ENCODE measurements at regions of chr2 and their contacts with region 1.

Region 1: DNA sequence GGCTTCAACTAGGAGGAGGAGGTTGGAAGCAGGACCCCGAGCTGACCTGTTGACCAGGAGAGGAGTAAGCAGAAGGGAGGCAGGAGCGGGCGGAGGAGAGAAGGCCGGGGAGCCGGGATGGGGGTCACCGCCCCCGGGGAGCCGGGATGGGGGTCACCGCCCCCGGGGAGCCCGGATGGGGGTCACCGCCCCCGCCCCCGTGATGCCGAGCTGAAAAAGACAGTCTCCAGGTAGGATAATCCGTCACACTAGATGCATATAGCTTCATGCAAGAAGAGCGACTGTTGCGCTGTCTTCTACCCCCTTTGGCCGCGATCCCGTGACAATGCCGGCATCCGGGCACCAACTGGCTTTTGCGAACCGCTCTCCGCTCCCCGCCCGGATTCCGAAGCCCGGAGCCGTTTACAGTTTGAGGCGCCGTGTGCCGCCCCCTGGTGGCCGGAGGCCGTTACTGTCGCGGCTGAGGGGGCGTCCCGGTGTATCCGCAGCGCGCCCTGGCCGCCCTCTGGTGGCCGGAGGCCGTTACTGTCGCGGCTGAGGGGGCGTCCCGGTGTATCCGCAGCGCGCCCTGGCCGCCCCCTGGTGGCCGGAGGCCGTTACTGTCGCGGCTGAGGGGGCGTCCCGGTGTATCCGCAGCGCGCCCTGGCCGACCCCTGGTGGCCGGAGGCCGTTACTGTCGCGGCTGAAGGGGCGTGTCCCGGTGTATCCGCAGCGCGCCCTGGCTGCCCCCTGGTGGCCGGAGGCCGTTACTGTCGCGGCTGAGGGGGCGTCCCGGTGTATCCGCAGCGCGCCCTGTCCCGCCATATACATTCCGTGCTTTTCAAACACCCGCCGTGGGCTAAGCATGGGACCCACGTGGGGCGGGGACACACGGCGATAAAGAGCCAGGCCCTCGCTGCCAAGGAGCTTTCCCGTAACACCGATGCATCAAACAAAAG is 89.6 kb downstream of the ACTR3 start:
- DNase-seq: no peak

Region 2: GRCh38 chr2:114005110-114005783 is 25.8 kb after region 1 on chr2:
- intact Hi-C with region 1: no loop called
- DNase-seq: no peak

Region 3: GRCh38 chr2:114843963-114844362 is 864.5 kb after region 1 on chr2:
- intact Hi-C with region 1: loop called in 1 of 2 experiments (anchors 10 kb)
- DNase-seq: no peak

Measured in posterior vena cava (tissue), 2 donors.